Activated T-helper 1 cell treated with anti-CD3 and anti-CD28 coated beads, Interleukin-12 subunit alpha, Interleukin-12 subunit beta, Interleukin-2, Interleukin-4 antibody, amounts not matched to agents 30 ng/mL and 10 ng/mL and 1 ng/mL, durations not matched to agents 14 hours and 24 hours and 36 hours (primary cell): ENCODE measurements at regions of chr2 and their contacts with region 1.

Region 1: DNA sequence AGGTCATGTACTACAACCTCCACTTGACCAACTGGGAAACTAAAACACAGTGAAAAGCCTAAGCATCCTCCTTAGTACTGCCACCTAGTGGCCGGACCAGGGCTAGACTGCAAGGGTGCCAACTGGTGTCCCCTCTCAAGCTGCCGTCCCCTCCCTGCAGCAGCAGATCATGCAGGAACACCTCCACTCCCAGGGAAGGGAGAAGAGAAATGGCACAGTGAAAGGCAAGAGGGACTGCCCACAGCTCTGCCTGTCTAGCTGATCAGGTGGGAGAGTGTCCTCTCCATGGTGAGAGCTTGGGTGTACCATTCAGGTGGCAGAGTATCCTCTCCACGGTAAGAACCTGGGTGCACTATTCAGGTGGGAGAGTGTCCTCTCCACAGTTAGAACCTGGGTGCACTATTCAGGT is 78.1 kb downstream of the AAK1 start:
- DNase-seq: peak; percentile 58
- H3K4me3 Mint-ChIP-seq: no peak overlapping the region
- H3K27ac Mint-ChIP-seq: no peak overlapping the region
- H3K4me1 Mint-ChIP-seq: peaks cover 66% of the 10 kb centered on the region
- H3K27me3 Mint-ChIP-seq: no peaks in the 10 kb centered on the region

Region 2: DNA sequence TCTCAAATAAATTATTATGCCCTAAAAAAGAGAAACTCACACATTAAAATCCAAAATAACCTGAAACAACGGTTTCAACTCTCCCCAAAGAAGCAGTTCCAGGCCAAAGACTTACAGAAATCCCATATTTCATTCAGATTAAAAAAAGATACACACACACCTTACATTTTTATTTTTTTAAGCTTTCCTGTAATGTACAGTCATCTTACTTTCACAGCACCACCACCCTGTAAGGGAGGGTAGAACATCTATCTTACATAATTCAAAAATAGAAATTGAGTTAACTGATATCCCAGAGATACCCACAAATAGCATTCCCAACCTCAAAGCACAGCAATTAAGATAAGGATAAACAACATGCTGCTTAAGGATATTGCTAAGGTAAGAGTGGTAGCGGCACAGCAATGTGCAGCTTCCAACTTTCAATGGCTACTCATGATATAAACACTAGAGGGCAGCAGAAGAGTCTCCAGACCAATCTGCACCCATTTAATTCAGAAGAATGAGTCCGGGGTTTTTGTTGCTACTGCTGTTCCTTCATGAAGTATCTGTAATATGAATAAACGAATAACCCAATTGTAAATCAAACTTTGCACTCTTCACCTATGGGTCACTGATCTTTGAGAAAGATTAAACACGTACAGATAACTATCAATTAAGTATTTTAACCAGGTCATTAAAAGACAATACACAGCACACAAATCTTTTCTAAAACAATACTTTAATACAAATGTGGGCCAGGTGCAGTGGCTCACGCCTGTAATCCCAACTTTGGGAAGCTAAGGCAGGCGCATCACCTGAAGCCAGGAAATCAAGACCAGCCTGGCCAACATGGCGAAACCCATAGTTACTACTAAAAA is 189.7 kb before region 1 on chr2:
- intact Hi-C with region 1: loop called (anchors 5 kb)
- DNase-seq: no peak
- H3K4me3 Mint-ChIP-seq: no peak overlapping the region
- H3K27ac Mint-ChIP-seq: no peak overlapping the region
- H3K4me1 Mint-ChIP-seq: peaks cover 13% of the 10 kb centered on the region
- H3K27me3 Mint-ChIP-seq: no peaks in the 10 kb centered on the region

Region 3: GRCh38 chr2:69549421-69549820 is 16.0 kb before region 1 on chr2:
- intact Hi-C with region 1: no loop called
- DNase-seq: no peak
- H3K4me3 Mint-ChIP-seq: no peak overlapping the region
- H3K27ac Mint-ChIP-seq: no peak overlapping the region
- H3K4me1 Mint-ChIP-seq: peaks cover 22% of the 10 kb centered on the region
- H3K27me3 Mint-ChIP-seq: no peaks in the 10 kb centered on the region

Region 4: DNA sequence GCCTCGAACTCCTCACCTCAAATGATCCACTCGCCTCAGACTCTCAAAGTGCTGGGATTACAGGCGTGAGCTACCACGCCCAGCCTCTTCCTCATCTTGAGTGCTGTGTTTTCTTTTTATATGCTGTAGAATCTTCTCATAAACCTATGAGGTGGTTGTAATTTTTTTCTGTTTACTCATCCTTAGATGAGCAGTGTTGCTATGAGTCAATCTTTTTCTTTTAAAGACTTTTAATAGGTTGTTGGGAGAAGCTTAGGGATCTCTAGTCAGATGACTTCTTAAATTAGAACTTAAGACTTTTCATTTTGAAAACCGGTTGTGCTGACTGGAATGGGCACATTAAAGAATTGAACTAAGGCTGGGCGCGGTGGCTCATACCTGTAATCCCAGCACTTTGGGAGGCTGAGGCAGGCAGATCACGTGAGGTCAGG is 86.8 kb after region 1 on chr2:
- intact Hi-C with region 1: no loop called
- DNase-seq: no peak
- H3K4me3 Mint-ChIP-seq: no peak overlapping the region
- H3K27ac Mint-ChIP-seq: peak overlapping the region; percentile 72
- H3K4me1 Mint-ChIP-seq: peaks cover 50% of the 10 kb centered on the region
- H3K27me3 Mint-ChIP-seq: no peaks in the 10 kb centered on the region

Region 5: DNA sequence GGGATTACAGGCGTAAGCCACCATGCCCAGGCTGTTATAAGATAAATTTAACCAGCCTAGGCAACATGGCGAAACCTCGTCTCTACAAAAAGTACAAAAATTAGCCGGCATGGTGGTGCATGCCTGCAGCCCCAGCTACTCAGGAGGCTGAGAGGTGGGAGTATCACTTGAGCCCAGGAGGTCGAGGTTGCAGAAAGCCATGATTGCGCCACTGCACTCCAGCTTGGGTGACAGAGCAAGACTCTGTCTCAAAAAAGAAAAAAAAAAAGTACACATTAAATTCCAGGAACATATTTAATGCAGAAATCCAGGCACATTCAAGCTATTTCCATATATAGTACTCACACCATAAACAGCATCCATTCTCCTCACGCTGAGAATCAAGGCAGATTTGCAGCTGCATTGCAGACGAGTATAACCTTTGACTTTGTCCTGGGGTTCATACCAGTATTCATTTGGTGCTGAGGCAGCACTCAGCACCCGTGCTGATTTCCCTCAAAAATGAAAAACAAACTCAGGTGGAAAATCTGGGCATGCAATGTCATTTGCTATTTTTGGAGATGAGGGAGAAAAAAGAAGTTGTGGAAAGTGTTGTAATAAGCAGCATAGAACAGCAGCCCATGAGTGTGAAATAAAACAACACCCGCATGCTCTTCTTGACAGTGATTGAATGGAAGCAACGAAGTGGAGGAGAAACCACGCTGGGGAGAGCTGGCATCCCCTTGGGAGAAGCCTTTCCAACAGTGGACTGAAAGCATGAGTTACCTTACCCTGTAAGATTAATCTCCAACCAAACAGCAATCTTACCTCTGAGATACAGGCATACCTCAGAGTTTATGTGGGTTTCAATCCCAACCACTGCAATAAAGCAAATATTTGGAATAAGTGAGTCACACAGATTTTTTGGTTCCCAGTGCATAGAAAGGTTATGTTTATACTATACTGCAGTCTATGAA is 129.7 kb after region 1 on chr2:
- intact Hi-C with region 1: loop called (anchors 5 kb)
- DNase-seq: no peak
- H3K4me3 Mint-ChIP-seq: peak overlapping the region; percentile 2
- H3K27ac Mint-ChIP-seq: peak overlapping the region; percentile 63
- H3K4me1 Mint-ChIP-seq: peaks cover 80% of the 10 kb centered on the region
- H3K27me3 Mint-ChIP-seq: no peaks in the 10 kb centered on the region